GM12878 (cell line): ENCODE measurements at regions of chr13 and their contacts with region 1.

Region 1: DNA sequence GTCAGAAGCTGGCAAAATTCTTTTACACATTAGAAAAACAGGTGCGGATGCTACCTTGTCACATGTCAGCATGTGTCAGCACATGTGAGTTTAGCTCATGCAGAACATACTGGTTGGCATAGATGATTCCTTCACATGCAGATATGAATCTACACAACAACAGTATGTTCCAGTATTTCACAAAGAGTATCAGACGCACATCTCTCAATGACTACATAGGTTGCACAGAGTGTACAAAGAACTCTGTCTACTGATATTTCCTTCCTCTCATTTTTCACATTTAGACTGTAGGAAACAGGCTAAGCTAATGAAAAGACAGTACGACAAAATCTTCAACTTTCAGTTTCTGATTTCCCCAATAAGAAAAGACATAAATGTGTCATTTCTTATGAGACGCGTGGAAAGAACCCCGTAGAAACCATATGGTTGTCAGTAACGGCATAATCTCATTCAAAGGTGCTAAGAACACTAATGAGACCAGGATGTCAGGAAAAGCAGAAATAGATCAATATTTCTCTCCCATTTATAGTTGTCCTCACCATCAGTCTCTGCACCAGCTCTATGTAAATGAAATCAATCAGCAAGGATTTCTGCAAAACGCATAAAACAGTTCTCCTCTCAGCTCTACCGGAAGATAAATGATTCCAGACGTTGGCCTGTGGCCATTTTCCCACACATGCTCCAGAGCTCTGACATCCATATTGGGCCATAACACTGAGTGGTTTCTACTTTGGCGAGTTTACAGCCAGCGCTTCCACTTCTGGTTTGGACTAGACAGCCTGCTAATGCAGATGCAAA is 81.2 kb downstream of the STARD13 start:
- DNase-seq: peak; percentile 78
- ATAC-seq: peak; percentile 40
- H3K4me3 ChIP-seq: peak overlapping the region; percentile 74
- H3K27ac ChIP-seq: peak overlapping the region; percentile 95
- H3K4me1 ChIP-seq: peaks cover 42% of the 10 kb centered on the region
- H3K27me3 ChIP-seq: no peaks in the 10 kb centered on the region
- CTCF ChIP-seq: no peak
- EP300 ChIP-seq: no peak; a peak in 3 of 4 replicates
- POLR2A ChIP-seq: no peak
- RAD21 ChIP-seq: no peak

Region 2: DNA sequence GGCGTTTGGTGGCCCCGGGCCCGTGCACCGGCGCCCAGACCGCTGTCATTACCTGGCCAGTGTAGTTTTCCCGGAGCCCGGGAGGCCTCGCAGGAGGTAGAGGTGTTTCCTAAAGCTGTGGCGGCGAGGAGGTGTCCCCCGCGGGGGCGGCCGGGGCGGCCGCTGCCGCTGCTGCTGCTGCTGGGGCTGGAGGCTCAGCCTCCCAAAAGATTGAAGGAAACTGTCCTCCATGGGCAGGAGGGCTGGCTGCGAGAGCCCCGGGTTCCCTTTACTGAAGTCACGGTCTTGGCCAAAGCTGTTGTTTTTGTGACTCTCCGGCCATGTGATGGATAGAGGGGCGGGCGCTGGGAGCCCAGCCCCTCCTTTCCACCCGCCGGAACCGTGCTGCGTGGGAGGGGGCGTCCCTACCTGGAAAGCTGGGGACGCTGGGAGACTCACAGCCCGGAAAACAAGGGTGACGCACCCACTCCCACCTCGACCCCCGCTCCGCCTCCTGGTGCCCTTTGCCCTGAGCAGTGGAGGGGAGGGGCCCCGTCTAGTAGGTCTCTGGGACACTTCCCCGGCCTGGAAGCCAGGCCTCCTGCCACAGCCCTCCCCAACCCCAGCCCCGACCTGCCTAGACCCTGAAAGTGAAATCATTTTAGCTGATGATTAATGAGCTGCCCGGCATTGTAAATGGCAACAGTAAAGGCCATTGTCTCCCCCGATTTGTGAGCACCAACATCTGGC is 776.3 kb before region 1 on chr13 and contains the start of gene N4BP2L1:
- CTCF ChIA-PET with region 1: no interaction called
- POLR2A ChIA-PET with region 1: no interaction called
- RAD21 ChIA-PET with region 1: no interaction called
- SMC1A ChIA-PET with region 1: no interaction called
- in situ Hi-C with region 1: no loop called
- intact Hi-C with region 1: loop called (anchors 10 kb)
- DNase-seq: peak; percentile 87
- ATAC-seq: peak; percentile 85
- H3K4me3 ChIP-seq: peak within 1 kb of the TSS; percentile 94
- H3K27ac ChIP-seq: peak within 1 kb of the TSS; percentile 98
- H3K4me1 ChIP-seq: peaks cover 17% of the 10 kb centered on the region
- H3K27me3 ChIP-seq: no peaks in the 10 kb centered on the region
- CTCF ChIP-seq: no peak
- EP300 ChIP-seq: peak in 1 of 2 experiments; percentile 36; a peak in 1 of 4 replicates
- POLR2A ChIP-seq: peak; percentile 91
- RAD21 ChIP-seq: no peak
- polyA plus RNA-seq, gene N4BP2L1: 3.3 to 5.7 TPM

Region 3: DNA sequence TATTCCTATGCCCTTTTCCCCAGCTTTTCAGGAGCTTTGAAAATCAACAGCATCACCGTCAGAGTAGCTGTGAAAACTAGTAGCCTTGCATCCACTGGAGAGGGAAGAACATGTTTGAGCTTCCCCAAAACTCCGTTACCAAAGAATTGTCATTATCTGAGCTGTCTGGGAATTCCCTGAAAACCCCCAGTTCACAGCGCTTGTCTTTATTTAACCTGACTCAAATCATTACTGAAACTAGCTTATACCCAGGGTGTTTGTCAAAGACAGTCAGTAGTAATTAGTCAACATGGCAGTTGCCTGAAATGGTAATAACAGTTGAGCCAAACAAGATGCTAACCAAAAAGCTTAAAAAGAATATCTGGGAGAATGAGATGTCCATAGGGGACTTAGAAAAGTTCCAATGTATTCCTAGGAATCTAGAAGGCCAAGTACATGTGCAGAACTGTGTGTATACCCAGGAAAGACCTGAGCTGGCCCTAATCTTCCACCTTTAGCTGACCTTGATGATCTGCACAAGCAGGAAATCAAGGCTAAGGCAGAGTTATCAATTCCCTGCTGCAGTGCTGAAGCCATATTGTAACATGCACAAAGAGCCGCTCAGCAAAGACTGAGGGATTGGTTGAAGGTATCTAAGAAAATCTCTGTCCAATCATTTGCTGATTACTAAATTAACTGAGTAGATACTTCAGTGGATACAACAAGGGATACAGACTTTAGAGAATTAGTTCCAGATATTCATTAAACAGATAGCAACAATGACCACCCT is 57.3 kb before region 1 on chr13:
- CTCF ChIA-PET with region 1: interaction called, 13 read pairs
- POLR2A ChIA-PET with region 1: interaction called, 343 read pairs
- RAD21 ChIA-PET with region 1: interaction called, 231 read pairs
- SMC1A ChIA-PET with region 1: interaction called, 832 read pairs
- in situ Hi-C with region 1: no loop called
- intact Hi-C with region 1: loop called (anchors 2 kb)
- DNase-seq: peak; percentile 98
- ATAC-seq: peak; percentile 63
- H3K4me3 ChIP-seq: no peak overlapping the region
- H3K27ac ChIP-seq: peak overlapping the region; percentile 98
- H3K4me1 ChIP-seq: peaks cover 59% of the 10 kb centered on the region
- H3K27me3 ChIP-seq: no peaks in the 10 kb centered on the region
- CTCF ChIP-seq: no peak
- EP300 ChIP-seq: peak; percentile 99
- POLR2A ChIP-seq: no peak
- RAD21 ChIP-seq: peak; percentile 37; the same call in 1 of the 2 replicates

Region 4: GRCh38 chr13:33218001-33218400 is 13.7 kb after region 1 on chr13:
- CTCF ChIA-PET with region 1: interaction called, 5 read pairs
- POLR2A ChIA-PET with region 1: interaction called, 7 read pairs
- RAD21 ChIA-PET with region 1: interaction called, 6 read pairs
- SMC1A ChIA-PET with region 1: interaction called, 10 read pairs
- in situ Hi-C with region 1: no loop called
- intact Hi-C with region 1: no loop called
- DNase-seq: no peak
- ATAC-seq: no peak
- H3K4me3 ChIP-seq: no peak overlapping the region
- H3K27ac ChIP-seq: no peak overlapping the region
- H3K4me1 ChIP-seq: no peaks in the 10 kb centered on the region
- H3K27me3 ChIP-seq: no peaks in the 10 kb centered on the region
- CTCF ChIP-seq: no peak
- EP300 ChIP-seq: no peak
- POLR2A ChIP-seq: no peak
- RAD21 ChIP-seq: no peak

Region 5: DNA sequence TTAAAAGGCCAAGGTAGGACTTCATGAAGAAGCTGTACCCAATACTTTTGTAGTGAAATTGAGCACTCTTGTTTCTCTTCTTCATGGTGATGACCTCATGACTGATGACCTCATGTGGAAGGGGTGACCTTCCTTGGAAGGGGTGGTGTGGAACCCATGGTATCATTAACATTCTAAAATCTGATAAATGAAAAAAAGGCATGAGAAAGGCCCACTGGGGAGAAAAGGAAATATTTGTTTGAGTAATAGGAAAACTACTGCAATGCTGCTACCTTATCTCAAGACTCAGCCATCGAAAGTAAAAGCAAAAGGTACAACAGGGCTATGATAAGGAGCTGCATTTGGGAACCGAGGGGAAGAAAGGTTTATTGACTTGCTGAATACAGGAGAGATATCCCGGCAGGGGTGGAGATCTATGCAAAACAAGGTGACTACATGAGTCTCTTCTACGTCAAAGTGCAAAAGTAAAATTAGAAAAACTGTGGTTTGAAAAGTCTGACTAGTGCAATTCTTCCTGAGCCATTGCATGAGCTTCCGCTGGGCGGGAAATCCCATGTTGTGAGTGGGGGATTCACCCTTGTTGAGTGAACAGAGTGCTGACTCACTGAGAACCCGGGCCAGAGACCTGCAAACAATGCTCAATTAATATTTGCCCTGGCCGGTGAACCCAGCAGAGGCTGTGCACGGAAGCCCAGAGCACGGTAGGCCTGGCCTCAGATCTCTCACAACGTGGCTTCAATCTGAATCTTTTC is 474.8 kb after region 1 on chr13:
- CTCF ChIA-PET with region 1: no interaction called
- POLR2A ChIA-PET with region 1: no interaction called
- RAD21 ChIA-PET with region 1: no interaction called
- SMC1A ChIA-PET with region 1: interaction called, 3 read pairs
- in situ Hi-C with region 1: no loop called
- intact Hi-C with region 1: loop called (anchors 5 kb)
- DNase-seq: peak; percentile 98
- ATAC-seq: peak; percentile 97
- H3K4me3 ChIP-seq: peak overlapping the region; percentile 77
- H3K27ac ChIP-seq: peak overlapping the region; percentile 95
- H3K4me1 ChIP-seq: peaks cover 5% of the 10 kb centered on the region; the same call in 1 of the 2 replicates
- H3K27me3 ChIP-seq: no peaks in the 10 kb centered on the region
- CTCF ChIP-seq: no peak
- EP300 ChIP-seq: peak; percentile 75 to 82; a peak in 2 of 4 replicates
- POLR2A ChIP-seq: peak; percentile 90
- RAD21 ChIP-seq: 0 out of 2 replicates have a peak, but pooled peaks have one; percentile 0

Region 6: GRCh38 chr13:35164324-35164932 is 1960.1 kb after region 1 on chr13:
- CTCF ChIA-PET with region 1: no interaction called
- POLR2A ChIA-PET with region 1: no interaction called
- RAD21 ChIA-PET with region 1: no interaction called
- SMC1A ChIA-PET with region 1: no interaction called
- in situ Hi-C with region 1: loop called (anchors 10 kb)
- intact Hi-C with region 1: loop called (anchors 10 kb)
- DNase-seq: peak; percentile 40
- ATAC-seq: peak; percentile 88
- H3K4me3 ChIP-seq: no peak overlapping the region
- H3K27ac ChIP-seq: no peak overlapping the region
- H3K4me1 ChIP-seq: peaks cover 22% of the 10 kb centered on the region
- H3K27me3 ChIP-seq: no peaks in the 10 kb centered on the region
- CTCF ChIP-seq: peak; percentile 47 to 78 (median 51); a peak in 5 of 6 replicates
- EP300 ChIP-seq: no peak
- POLR2A ChIP-seq: no peak
- RAD21 ChIP-seq: peak; percentile 87